ENCODE measurements at regions of chr16 and their contacts with region 1.

Region 1: DNA sequence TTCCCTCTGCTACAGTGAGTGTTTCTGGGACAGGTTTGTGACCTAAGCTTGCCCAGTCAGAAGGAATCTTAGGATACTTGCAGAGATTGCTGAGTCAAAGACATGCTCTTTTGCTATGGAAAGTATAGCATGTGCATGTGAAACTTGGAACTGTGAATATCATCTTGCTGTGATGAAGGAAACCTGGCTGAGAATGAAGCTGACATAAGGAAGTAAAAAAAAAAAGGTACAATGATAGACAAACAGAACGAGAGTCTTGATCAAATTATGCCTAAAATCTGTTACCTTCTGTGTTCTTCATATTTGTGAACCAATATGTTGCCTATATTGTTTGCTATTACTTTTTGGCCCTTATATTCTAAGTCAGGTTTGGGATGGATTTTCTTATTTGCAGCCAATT is 525.7 kb downstream of the NPIPA7 start:
- DNase-seq: no peak
- ATAC-seq: no peak
- H3K4me3 ChIP-seq: no peak overlapping the region
- H3K4me3 Mint-ChIP-seq: no peak overlapping the region
- H3K27ac ChIP-seq: no peak overlapping the region
- H3K27ac Mint-ChIP-seq: no peak overlapping the region
- H3K4me1 ChIP-seq: no peaks in the 10 kb centered on the region
- H3K4me1 Mint-ChIP-seq: no peaks in the 10 kb centered on the region
- H3K27me3 ChIP-seq: no peaks in the 10 kb centered on the region
- H3K27me3 Mint-ChIP-seq: no peaks in the 10 kb centered on the region
- CTCF ChIP-seq: no peak

Region 2: GRCh38 chr16:16867973-16868372 is 36.6 kb before region 1 on chr16:
- CTCF ChIA-PET with region 1: no interaction called
- POLR2A ChIA-PET with region 1: interaction called, 12 read pairs
- intact Hi-C with region 1: no loop called
- DNase-seq: no peak
- ATAC-seq: no peak
- H3K4me3 ChIP-seq: no peak overlapping the region
- H3K4me3 Mint-ChIP-seq: no peak overlapping the region
- H3K27ac ChIP-seq: no peak overlapping the region
- H3K27ac Mint-ChIP-seq: no peak overlapping the region
- H3K4me1 ChIP-seq: no peaks in the 10 kb centered on the region
- H3K4me1 Mint-ChIP-seq: no peaks in the 10 kb centered on the region
- H3K27me3 ChIP-seq: no peaks in the 10 kb centered on the region
- H3K27me3 Mint-ChIP-seq: peaks cover 18% of the 10 kb centered on the region
- CTCF ChIP-seq: no peak

Region 3: GRCh38 chr16:16884451-16884850 is 20.1 kb before region 1 on chr16:
- CTCF ChIA-PET with region 1: no interaction called
- POLR2A ChIA-PET with region 1: no interaction called
- intact Hi-C with region 1: no loop called
- DNase-seq: no peak
- ATAC-seq: no peak
- H3K4me3 ChIP-seq: no peak overlapping the region
- H3K4me3 Mint-ChIP-seq: no peak overlapping the region
- H3K27ac ChIP-seq: no peak overlapping the region
- H3K27ac Mint-ChIP-seq: no peak overlapping the region
- H3K4me1 ChIP-seq: no peaks in the 10 kb centered on the region
- H3K4me1 Mint-ChIP-seq: no peaks in the 10 kb centered on the region
- H3K27me3 ChIP-seq: no peaks in the 10 kb centered on the region
- H3K27me3 Mint-ChIP-seq: no peaks in the 10 kb centered on the region
- CTCF ChIP-seq: no peak

Region 4: GRCh38 chr16:16945207-16945606 is 40.6 kb after region 1 on chr16:
- CTCF ChIA-PET with region 1: no interaction called
- POLR2A ChIA-PET with region 1: no interaction called
- intact Hi-C with region 1: loop called in 1 of 2 experiments (anchors 2 kb)
- DNase-seq: no peak
- ATAC-seq: no peak
- H3K4me3 ChIP-seq: no peak overlapping the region
- H3K4me3 Mint-ChIP-seq: no peak overlapping the region
- H3K27ac ChIP-seq: no peak overlapping the region
- H3K27ac Mint-ChIP-seq: no peak overlapping the region
- H3K4me1 ChIP-seq: no peaks in the 10 kb centered on the region
- H3K4me1 Mint-ChIP-seq: no peaks in the 10 kb centered on the region
- H3K27me3 ChIP-seq: no peaks in the 10 kb centered on the region
- H3K27me3 Mint-ChIP-seq: no peaks in the 10 kb centered on the region
- CTCF ChIP-seq: no peak

Measured in CD8-positive, alpha-beta T cell (primary cell).